ENCODE measurements at regions of chr3 and their contacts with region 1.

Region 1: GRCh38 chr3:44861412-44862220 is at the start of gene TMEM42:
- DNase-seq: peak; percentile 90
- ATAC-seq: peak; percentile 97
- H3K4me3 Mint-ChIP-seq: peak within 1 kb of the TSS; percentile 88
- H3K27ac Mint-ChIP-seq: peak within 1 kb of the TSS; percentile 85
- H3K4me1 Mint-ChIP-seq: peaks cover 17% of the 10 kb centered on the region
- H3K27me3 Mint-ChIP-seq: no peaks in the 10 kb centered on the region
- CTCF ChIP-seq: no peak
- total RNA-seq, gene TMEM42: 12.4 and 13.1 TPM in 2 replicates

Region 2: GRCh38 chr3:43621656-43622432 is 1239.8 kb before region 1 on chr3 and contains the start of gene ANO10:
- CTCF ChIA-PET with region 1: no interaction called
- POLR2A ChIA-PET with region 1: no interaction called
- intact Hi-C with region 1: loop called (anchors 5 kb)
- DNase-seq: peak; percentile 98
- ATAC-seq: peak; percentile 91
- H3K4me3 Mint-ChIP-seq: peak within 1 kb of the TSS; percentile 88
- H3K27ac Mint-ChIP-seq: peak within 1 kb of the TSS; percentile 77
- H3K4me1 Mint-ChIP-seq: peaks cover 13% of the 10 kb centered on the region
- H3K27me3 Mint-ChIP-seq: peaks cover 1% of the 10 kb centered on the region
- CTCF ChIP-seq: no peak
- total RNA-seq, gene ANO10: 6.4 and 8.1 TPM in 2 replicates

Region 3: DNA sequence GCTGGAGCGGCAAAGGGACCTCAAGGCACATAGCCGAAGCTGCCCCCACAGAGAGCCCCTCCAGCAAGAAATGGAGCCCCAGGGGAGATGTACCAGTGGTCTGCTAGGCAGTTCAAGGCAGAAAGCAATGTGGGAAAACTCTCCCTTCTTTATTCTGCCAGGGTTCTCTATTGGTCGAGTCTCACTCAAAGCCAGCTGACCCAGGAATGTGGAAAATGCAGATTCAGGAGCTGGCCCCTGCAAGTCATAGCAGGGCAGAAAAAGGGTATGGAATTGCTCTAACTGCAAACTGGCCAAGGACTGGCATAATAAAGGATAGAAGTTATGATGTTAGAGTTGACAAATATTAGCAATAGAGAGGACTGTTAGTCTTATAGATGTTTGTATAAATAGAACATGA is 624.0 kb before region 1 on chr3:
- CTCF ChIA-PET with region 1: no interaction called
- POLR2A ChIA-PET with region 1: no interaction called
- intact Hi-C with region 1: no loop called
- DNase-seq: no peak
- ATAC-seq: no peak
- H3K4me3 Mint-ChIP-seq: no peak overlapping the region
- H3K27ac Mint-ChIP-seq: no peak overlapping the region
- H3K4me1 Mint-ChIP-seq: peaks cover 4% of the 10 kb centered on the region
- H3K27me3 Mint-ChIP-seq: peaks cover 18% of the 10 kb centered on the region
- CTCF ChIP-seq: no peak

Region 4: GRCh38 chr3:44477312-44478030 is 384.1 kb before region 1 on chr3 and contains the start of gene ZNF445:
- CTCF ChIA-PET with region 1: no interaction called
- POLR2A ChIA-PET with region 1: no interaction called
- intact Hi-C with region 1: loop called (anchors 1 kb)
- DNase-seq: peak; percentile 76
- ATAC-seq: peak; percentile 94
- H3K4me3 Mint-ChIP-seq: peak within 1 kb of the TSS; percentile 91
- H3K27ac Mint-ChIP-seq: peak within 1 kb of the TSS; percentile 61
- H3K4me1 Mint-ChIP-seq: peaks cover 25% of the 10 kb centered on the region
- H3K27me3 Mint-ChIP-seq: no peaks in the 10 kb centered on the region
- CTCF ChIP-seq: no peak
- total RNA-seq, gene ZNF445: 17.3 and 19.5 TPM in 2 replicates

Region 5: DNA sequence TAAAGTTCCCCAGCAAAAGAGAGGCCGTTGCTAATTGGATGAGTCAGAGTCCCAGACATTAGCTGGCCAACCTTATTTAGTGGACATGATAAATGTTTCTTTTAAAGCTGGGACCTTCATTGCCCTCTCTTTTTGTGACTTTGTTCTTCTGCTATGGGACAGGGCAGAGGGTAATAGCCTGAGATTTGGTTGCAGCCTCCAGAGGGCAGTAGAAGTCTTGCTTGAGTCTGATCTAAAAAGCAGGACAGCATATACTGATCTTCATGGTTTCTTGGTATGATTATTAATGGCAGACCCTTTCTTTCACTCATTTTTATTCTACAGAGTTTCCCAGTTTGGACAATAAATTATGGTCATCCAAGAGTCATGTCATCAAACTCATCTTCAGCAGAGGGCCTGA is 331.7 kb before region 1 on chr3:
- CTCF ChIA-PET with region 1: no interaction called
- POLR2A ChIA-PET with region 1: no interaction called
- intact Hi-C with region 1: loop called (anchors 2 kb)
- DNase-seq: no peak
- ATAC-seq: no peak
- H3K4me3 Mint-ChIP-seq: no peak overlapping the region
- H3K27ac Mint-ChIP-seq: no peak overlapping the region
- H3K4me1 Mint-ChIP-seq: no peaks in the 10 kb centered on the region
- H3K27me3 Mint-ChIP-seq: peaks cover 32% of the 10 kb centered on the region
- CTCF ChIP-seq: no peak

Region 6: GRCh38 chr3:44624749-44625480 is 236.7 kb before region 1 on chr3 and contains the start of gene ZNF197:
- CTCF ChIA-PET with region 1: no interaction called
- POLR2A ChIA-PET with region 1: interaction called, 7 read pairs
- intact Hi-C with region 1: loop called (anchors 10 kb)
- DNase-seq: peak; percentile 51
- ATAC-seq: peak; percentile 90
- H3K4me3 Mint-ChIP-seq: peak within 1 kb of the TSS; percentile 90
- H3K27ac Mint-ChIP-seq: peak within 1 kb of the TSS; percentile 65
- H3K4me1 Mint-ChIP-seq: peaks cover 34% of the 10 kb centered on the region
- H3K27me3 Mint-ChIP-seq: no peaks in the 10 kb centered on the region
- CTCF ChIP-seq: no peak
- total RNA-seq, gene ZNF197: 15.8 and 16.9 TPM in 2 replicates

Region 7: DNA sequence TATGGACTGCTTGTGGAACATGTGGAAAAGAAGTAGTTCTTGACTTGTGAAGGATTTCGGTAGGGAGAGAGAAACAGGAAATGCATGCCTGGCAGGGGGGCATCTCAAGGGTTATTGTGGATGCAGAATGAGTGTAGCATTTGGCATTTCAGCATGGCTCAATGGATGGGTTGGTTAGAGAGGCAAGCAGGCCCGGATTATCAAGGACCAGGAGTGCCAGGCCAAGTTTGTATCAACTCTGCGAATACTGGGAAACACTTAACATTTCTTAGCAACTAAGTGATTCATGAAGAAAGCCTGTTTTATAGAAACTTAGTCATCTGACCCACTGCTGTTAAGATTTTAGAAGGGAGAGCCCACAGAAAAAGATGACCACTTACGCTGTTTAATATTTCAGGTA is 66.4 kb before region 1 on chr3:
- CTCF ChIA-PET with region 1: no interaction called
- POLR2A ChIA-PET with region 1: no interaction called
- intact Hi-C with region 1: no loop called
- DNase-seq: no peak
- ATAC-seq: no peak
- H3K4me3 Mint-ChIP-seq: no peak overlapping the region
- H3K27ac Mint-ChIP-seq: no peak overlapping the region
- H3K4me1 Mint-ChIP-seq: no peaks in the 10 kb centered on the region
- H3K27me3 Mint-ChIP-seq: no peaks in the 10 kb centered on the region
- CTCF ChIP-seq: no peak

Region 8: GRCh38 chr3:44976002-44976815 is 114.6 kb after region 1 on chr3 and contains the starts of genes EXOSC7 and ZDHHC3:
- CTCF ChIA-PET with region 1: no interaction called
- POLR2A ChIA-PET with region 1: interaction called, 10 read pairs
- intact Hi-C with region 1: loop called (anchors 5 kb)
- DNase-seq: peak; percentile 76
- ATAC-seq: peak; percentile 94
- H3K4me3 Mint-ChIP-seq: peak within 1 kb of the TSS; percentile 93
- H3K27ac Mint-ChIP-seq: peak within 1 kb of the TSS; percentile 88
- H3K4me1 Mint-ChIP-seq: peaks cover 49% of the 10 kb centered on the region
- H3K27me3 Mint-ChIP-seq: no peaks in the 10 kb centered on the region
- CTCF ChIP-seq: no peak
- total RNA-seq, gene EXOSC7: 42.5 and 44.0 TPM in 2 replicates
- total RNA-seq, gene ZDHHC3: 38.5 and 43.4 TPM in 2 replicates